ENCODE measurements at regions of chr17 and their contacts with region 1.

Region 1: GRCh38 chr17:16415031-16415924 is at the start of gene TRPV2:
- DNase-seq: peak; percentile 54

Region 2: GRCh38 chr17:16428098-16428882 is 13.0 kb after region 1 on chr17:
- CTCF ChIA-PET with region 1: interaction called, 12 read pairs
- POLR2A ChIA-PET with region 1: interaction called, 14 read pairs
- DNase-seq: peak; percentile 77

Region 3: GRCh38 chr17:16463358-16464302 is 48.4 kb after region 1 on chr17:
- CTCF ChIA-PET with region 1: no interaction called
- POLR2A ChIA-PET with region 1: no interaction called
- DNase-seq: no peak

Region 4: GRCh38 chr17:16568541-16569357 is 153.5 kb after region 1 on chr17 and contains the start of gene ZNF287:
- CTCF ChIA-PET with region 1: no interaction called
- POLR2A ChIA-PET with region 1: no interaction called
- DNase-seq: peak; percentile 98

Measured in HEK293T (cell line).